ENCODE measurements at regions of chr17 and their contacts with region 1.

Region 1: DNA sequence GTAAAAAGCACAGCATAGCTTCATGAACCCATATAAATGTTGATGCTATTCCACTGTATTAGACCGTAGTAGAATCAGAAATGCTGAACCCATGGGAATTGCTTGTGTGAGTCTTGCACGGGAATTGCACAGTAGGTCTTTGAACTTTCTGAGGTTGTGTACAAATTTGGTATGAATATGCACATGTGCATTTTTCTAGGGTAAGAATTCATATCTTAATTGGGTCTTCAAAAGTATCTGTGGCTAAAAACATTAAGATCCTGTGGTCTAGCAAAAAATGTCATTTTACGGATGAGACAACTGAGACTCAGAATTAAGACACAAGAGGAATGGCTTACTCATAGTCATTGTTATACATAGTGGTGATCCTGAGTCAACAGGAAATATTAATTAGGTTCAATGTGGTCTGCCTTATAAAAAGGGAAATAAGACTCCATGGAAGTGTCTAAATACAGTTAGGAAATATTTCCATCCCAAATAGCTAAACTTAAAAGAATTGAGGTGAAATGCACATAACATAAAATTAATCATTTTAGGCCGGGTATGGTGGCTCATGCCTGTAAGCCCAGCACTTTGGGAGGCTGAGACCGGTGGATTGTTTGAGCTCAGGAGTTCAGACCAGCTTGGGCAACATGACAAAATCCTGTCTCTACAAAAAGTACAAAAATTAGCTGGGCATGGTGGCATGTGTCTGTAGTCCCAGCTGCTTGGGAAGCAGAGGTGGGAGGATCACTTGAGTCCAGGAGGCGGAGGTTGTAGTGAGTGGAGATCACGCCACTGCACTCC is 22.8 kb downstream of the TAOK1 start:
- DNase-seq: no peak
- ATAC-seq: peak in 2 of 4 donors; percentile 52 to 69
- H3K4me3 ChIP-seq: no peak overlapping the region
- H3K27ac ChIP-seq: peak overlapping the region in 3 of 12 donors; percentile 16 to 50 (median 47)
- H3K4me1 ChIP-seq: peaks cover 0 to 33% (median 20%) of the 10 kb centered on the region in 12 donors
- H3K27me3 ChIP-seq: no peaks in the 10 kb centered on the region
- CTCF ChIP-seq: no peak
- POLR2A ChIP-seq: no peak

Region 2: GRCh38 chr17:29341751-29342150 is 71.2 kb before region 1 on chr17:
- intact Hi-C with region 1: no loop called
- DNase-seq: no peak
- ATAC-seq: no peak
- H3K4me3 ChIP-seq: no peak overlapping the region
- H3K27ac ChIP-seq: no peak overlapping the region
- H3K4me1 ChIP-seq: no peaks in the 10 kb centered on the region
- H3K27me3 ChIP-seq: peaks cover 0 to 5% (median 0%) of the 10 kb centered on the region in 9 donors
- CTCF ChIP-seq: no peak
- POLR2A ChIP-seq: no peak

Region 3: GRCh38 chr17:29443041-29443739 is 30.2 kb after region 1 on chr17:
- intact Hi-C with region 1: no loop called
- DNase-seq: no peak
- ATAC-seq: no peak
- H3K4me3 ChIP-seq: no peak overlapping the region
- H3K27ac ChIP-seq: no peak overlapping the region
- H3K4me1 ChIP-seq: peaks cover 0 to 34% (median 21%) of the 10 kb centered on the region in 12 donors
- H3K27me3 ChIP-seq: no peaks in the 10 kb centered on the region
- CTCF ChIP-seq: no peak
- POLR2A ChIP-seq: no peak

Region 4: GRCh38 chr17:29475891-29476290 is 62.9 kb after region 1 on chr17:
- intact Hi-C with region 1: loop called in 1 of 10 experiments (anchors 10 kb)
- DNase-seq: no peak
- ATAC-seq: no peak
- H3K4me3 ChIP-seq: no peak overlapping the region
- H3K27ac ChIP-seq: no peak overlapping the region
- H3K4me1 ChIP-seq: no peaks in the 10 kb centered on the region
- H3K27me3 ChIP-seq: no peaks in the 10 kb centered on the region
- CTCF ChIP-seq: no peak
- POLR2A ChIP-seq: no peak